ENCODE measurements at regions of chr5 and their contacts with region 1.

Region 1: DNA sequence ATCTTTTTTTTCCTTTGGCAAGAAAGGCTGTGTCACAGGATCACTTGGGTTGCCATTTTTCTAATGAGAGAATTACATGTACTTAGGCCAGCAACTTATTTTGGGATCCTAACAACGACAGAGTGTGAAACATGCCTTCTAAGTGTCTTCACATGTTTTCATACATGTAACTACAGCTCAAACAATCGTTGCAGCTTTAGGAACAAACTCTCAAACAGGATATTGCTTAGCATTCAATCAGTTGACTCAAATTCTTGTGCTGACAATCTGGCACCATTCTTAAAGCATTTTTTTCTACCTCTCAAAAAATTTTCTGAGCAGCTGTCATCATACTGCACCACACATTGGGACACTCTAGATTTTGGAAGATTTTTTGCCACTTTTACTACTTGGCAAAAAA is 435.5 kb downstream of the HINT1 start:
- DNase-seq: no peak
- ATAC-seq: no peak
- H3K4me3 ChIP-seq: no peak overlapping the region
- H3K27ac ChIP-seq: no peak overlapping the region
- H3K4me1 ChIP-seq: no peaks in the 10 kb centered on the region
- H3K27me3 ChIP-seq: no peaks in the 10 kb centered on the region
- CTCF ChIP-seq: no peak
- EP300 ChIP-seq: no peak
- POLR2A ChIP-seq: no peak
- RAD21 ChIP-seq: no peak

Region 2: DNA sequence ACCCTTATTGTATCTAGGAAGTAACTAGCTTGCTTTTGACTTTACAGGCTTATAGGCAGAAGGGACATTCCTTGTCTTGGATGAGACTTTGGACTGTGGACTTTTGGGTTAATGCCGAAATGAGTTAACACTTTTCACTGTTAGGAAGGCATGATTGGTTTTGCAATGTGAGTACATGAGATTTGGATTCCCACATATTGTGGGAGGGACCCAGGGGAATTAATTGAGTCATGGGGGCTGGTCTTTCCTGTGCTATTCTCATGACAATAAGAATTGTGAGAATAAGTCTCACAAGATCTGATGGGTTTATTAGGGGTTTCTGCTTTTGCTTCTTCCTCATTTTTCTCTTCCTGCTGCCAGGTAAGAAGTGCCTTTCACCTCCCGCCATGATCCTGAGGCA is 18.0 kb after region 1 on chr5:
- CTCF ChIA-PET with region 1: no interaction called
- POLR2A ChIA-PET with region 1: no interaction called
- RAD21 ChIA-PET with region 1: no interaction called
- SMC1A ChIA-PET with region 1: interaction called, 3 read pairs
- in situ Hi-C with region 1: no loop called
- intact Hi-C with region 1: loop called (anchors 1 kb)
- DNase-seq: no peak
- ATAC-seq: no peak
- H3K4me3 ChIP-seq: no peak overlapping the region
- H3K27ac ChIP-seq: no peak overlapping the region
- H3K4me1 ChIP-seq: no peaks in the 10 kb centered on the region
- H3K27me3 ChIP-seq: no peaks in the 10 kb centered on the region
- CTCF ChIP-seq: no peak
- EP300 ChIP-seq: no peak
- POLR2A ChIP-seq: no peak
- RAD21 ChIP-seq: no peak